ENCODE measurements at regions of chr1 and their contacts with region 1.

Region 1: DNA sequence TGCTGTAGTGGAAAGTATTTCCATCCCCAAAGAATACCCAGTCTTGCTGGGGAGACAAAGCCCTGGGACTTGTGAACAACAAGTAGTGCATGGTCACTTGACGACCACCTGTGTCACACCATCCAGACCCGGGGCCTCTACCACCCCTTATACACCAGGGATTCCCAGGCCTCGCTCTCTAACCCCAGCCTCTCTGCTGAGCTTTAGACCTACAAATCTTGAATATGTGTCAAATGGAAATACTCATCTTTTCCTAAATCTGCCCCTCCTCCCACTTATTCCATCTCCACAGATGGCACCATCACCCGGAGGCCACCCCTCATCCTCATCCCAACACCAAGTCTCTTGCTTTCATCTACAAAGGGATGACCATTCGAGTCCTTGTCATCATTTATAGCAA is 875 bp upstream of the RNASEL start:
- DNase-seq: no peak
- ATAC-seq: no peak
- H3K4me3 ChIP-seq: no peak overlapping the region
- H3K27ac ChIP-seq: no peak overlapping the region
- H3K4me1 ChIP-seq: no peaks in the 10 kb centered on the region
- H3K27me3 ChIP-seq: no peaks in the 10 kb centered on the region

Region 2: GRCh38 chr1:182446033-182446669 is 143.8 kb before region 1 on chr1:
- intact Hi-C with region 1: loop called in 1 of 2 experiments (anchors 5 kb)
- DNase-seq: no peak
- ATAC-seq: no peak
- H3K4me3 ChIP-seq: no peak overlapping the region
- H3K27ac ChIP-seq: no peak overlapping the region
- H3K4me1 ChIP-seq: no peaks in the 10 kb centered on the region
- H3K27me3 ChIP-seq: no peaks in the 10 kb centered on the region

Region 3: DNA sequence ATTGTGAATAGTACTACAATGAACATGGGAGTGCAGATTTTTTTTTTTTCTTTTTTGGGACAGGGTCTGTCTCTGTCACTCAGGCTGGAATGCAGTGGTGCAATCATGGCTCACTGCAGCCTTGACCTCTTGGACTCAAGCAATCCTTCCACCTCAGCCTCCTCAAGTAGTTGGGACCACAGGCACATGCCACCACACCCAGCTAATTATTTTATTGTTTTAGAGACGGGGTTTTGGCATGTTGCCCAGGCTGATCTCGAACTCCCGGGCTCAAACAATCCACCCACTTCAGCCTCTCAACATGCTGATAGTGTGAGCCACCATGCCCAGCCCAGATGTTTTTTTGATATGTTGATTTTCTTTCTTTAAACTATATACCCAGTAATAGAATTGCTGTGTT is 82.3 kb before region 1 on chr1:
- intact Hi-C with region 1: no loop called
- DNase-seq: no peak
- ATAC-seq: no peak
- H3K4me3 ChIP-seq: no peak overlapping the region
- H3K27ac ChIP-seq: no peak overlapping the region
- H3K4me1 ChIP-seq: no peaks in the 10 kb centered on the region
- H3K27me3 ChIP-seq: no peaks in the 10 kb centered on the region

Region 4: GRCh38 chr1:182752077-182752988 is 162.4 kb after region 1 on chr1:
- intact Hi-C with region 1: no loop called
- DNase-seq: no peak
- ATAC-seq: no peak
- H3K4me3 ChIP-seq: no peak overlapping the region
- H3K27ac ChIP-seq: no peak overlapping the region
- H3K4me1 ChIP-seq: no peaks in the 10 kb centered on the region
- H3K27me3 ChIP-seq: peaks cover 0 to 3% of the 10 kb centered on the region in 2 donors